Sigmoid colon (tissue), 7 donors: ENCODE measurements at regions of chr3 and their contacts with region 1.

Region 1: DNA sequence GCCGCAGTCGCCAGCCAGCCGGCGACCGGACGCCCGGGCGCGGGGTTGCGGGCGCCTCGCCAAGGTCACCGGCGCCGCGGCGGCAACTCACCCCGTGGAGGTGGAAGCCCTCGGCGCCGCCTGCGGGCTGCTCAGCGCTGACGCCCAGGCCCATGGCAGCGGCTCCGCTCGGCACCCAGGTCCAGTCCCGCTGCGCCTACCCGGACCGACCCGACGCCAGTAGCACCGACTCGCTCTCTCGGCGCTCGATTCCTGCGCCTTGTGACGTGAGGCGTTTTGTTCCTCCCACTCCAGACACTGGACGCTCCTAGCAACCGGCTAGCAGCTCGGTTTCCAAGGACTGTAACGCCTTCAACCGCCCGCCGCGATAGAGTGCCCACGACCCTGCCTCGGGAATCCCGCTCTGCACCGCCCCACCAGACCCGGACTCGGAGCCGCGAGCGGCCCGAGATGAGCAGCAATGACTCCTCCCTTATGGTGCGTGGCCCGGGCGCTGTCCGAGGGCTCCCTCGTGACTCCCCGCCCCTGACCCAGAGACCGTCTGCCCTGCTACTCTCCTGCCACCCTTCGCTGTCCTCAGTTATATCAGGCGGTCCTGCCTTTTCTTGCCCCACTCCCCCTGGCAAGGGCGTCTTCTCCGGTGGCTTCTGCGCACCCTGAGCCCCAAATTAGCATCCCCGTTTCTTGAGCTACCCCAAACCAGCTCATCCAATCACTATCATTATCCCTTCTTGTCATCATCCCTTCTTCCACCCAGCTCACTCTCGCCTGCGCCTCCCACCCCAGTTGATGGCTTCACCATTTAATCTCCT is at the starts of genes GORASP1 and TTC21A:
- DNase-seq: peak; percentile 96
- H3K4me3 ChIP-seq: peak within 1 kb of the TSS; percentile 75 to 98 (median 82)
- H3K27ac ChIP-seq: peak within 1 kb of the TSS; percentile 90 to 97 (median 94)
- H3K4me1 ChIP-seq: peaks cover 0 to 53% (median 43%) of the 10 kb centered on the region in 4 donors
- H3K27me3 ChIP-seq: no peaks in the 10 kb centered on the region
- CTCF ChIP-seq: no peak
- EP300 ChIP-seq: no peak
- POLR2A ChIP-seq: peak; percentile 50 to 62
- total RNA-seq, gene GORASP1: 43.5 to 49.9 (median 48.9) TPM
- total RNA-seq, gene TTC21A: 2.9 to 7.1 (median 4.4) TPM

Region 2: DNA sequence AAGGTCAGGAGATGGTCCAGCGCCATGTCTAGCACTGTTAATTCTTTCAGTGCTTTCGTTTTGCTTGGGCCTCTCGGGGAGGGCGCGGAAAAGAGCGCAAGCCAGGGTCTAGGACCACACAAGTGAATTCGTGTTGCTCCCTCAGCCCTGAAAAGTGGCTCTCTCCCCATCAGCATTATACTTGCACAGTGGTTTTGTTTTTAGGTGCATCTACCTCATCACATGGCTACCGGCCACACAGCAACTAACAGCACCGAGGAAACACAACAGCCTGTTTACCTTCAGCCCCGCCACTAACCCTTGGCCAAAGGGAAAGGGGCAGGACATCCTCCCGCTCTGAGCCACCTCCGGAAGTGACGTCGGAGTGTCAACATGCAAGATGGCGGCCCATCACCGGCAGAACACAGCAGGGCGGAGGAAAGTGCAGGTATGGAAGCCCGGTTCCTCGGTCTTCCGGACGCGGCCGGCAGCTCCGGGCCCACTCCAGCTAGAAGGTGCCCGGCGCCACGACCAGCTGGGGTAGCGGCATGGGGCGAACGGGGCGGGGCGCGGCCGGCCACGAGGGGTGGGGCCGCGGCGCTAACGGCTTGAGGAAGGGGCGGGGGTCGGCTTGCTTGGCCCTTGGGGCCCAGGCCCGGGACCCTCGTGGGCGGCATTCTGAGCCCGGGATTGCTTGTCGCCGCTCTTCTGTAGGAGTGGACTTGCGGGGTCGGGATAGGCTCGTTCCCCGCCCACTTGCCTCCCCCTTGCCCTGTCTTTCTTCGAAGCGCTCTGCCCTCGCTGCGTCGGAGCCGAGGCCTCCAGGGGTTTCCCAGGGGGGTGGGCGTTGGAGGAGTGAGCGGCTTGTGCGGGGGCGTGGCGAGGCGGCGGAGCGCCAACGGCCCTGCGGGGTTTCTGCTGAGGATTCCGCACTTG is 55.7 kb before region 1 on chr3 and contains the starts of genes SCN11A and WDR48:
- intact Hi-C with region 1: loop called (anchors 5 kb)
- DNase-seq: peak; percentile 97
- H3K4me3 ChIP-seq: peak within 1 kb of the TSS; percentile 92 to 99 (median 95)
- H3K27ac ChIP-seq: peak within 1 kb of the TSS; percentile 84 to 91 (median 87)
- H3K4me1 ChIP-seq: peaks cover 0 to 20% (median 16%) of the 10 kb centered on the region in 4 donors
- H3K27me3 ChIP-seq: no peaks in the 10 kb centered on the region
- CTCF ChIP-seq: no peak
- EP300 ChIP-seq: no peak
- POLR2A ChIP-seq: peak; percentile 69 to 83
- total RNA-seq, gene SCN11A: 0.82 to 3.0 (median 2.2) TPM
- total RNA-seq, gene WDR48: 37.4 to 50.2 (median 40.7) TPM

Region 3: DNA sequence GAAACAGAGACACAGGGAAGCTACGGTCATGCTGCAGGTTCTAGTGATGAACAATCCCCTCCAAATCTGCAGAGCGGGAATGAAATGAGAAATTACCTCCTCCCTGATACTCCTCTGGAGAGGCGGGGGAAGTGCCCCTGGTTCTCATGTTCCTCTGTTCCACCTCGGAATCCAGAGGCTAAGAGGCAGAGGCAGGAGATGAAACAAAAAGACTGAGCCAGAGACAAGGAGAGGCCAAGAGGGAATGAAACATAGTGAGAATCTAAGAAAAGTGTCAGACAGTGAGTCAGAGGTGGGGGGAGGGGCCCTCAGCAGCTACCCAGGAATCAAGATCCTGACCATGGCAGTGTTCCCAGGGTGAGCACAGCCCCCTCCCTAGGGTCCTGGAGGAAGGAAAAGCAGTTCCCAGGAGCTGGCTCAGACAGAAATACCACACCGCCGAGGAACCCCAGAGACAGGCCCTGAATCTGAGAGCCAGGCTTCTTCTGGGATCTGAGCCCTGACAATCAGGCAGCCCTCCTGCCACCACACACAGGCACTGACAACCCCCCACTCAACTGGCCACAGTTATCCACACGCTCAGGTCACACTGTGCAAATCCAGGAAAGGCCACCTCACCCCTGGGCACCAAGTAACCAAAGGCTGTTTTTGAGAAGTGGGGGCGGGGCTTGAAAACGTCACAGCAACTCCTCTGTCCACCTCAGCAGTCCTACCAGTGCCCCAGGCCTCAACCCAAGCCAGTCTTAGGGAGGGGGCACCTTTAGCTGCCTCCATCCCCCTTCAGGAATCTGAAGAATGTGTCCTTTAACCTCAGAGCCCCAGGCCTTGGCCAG is 43.4 kb after region 1 on chr3:
- intact Hi-C with region 1: loop called (anchors 1 kb)
- DNase-seq: peak; percentile 96
- H3K4me3 ChIP-seq: peak overlapping the region; percentile 90 to 100 (median 100)
- H3K27ac ChIP-seq: peak overlapping the region; percentile 97 to 100 (median 100)
- H3K4me1 ChIP-seq: peaks cover 0 to 74% (median 72%) of the 10 kb centered on the region in 4 donors
- H3K27me3 ChIP-seq: no peaks in the 10 kb centered on the region
- CTCF ChIP-seq: no peak
- EP300 ChIP-seq: peak in 2 of 4 donors; percentile 7 to 62
- POLR2A ChIP-seq: no peak

Region 4: DNA sequence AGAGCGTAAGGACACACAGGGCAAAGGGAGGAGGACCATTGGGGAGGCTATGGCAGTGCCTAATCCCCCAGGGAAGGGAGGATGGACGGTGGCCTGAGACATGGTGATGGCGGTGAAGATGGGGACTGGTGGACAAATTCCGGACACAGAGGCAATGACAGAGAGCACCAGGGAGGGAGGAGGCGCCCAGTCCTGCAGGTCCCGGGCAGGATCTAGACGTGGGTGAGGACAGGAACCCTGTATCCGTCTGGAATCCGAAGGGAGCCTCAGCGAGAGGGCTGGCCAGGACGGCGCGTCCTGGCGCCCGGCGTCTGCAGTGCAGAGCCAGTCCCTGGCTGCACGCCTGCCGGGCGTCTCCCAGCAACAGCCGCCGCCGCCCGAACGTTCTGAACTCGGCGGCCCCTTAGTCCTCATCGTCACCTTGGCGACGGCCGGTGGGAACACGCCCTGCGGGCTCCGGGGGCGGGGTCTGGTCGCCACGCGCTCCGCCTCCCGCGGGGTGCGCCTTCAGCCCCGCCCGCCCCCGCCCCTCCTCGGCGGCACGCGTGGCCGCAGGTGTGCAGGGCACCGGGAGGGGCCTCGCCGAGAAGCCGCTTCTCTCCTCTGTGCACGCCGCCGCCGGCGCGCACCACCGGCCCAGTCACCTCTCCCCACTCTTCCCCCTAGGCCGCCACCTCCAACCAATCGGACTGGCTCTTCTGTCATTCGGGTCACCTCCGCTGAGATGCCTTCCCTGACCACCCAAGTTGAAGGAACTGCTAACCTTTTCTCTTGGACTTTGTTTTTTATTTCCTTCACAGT is 73.2 kb after region 1 on chr3:
- intact Hi-C with region 1: loop called (anchors 2 kb)
- DNase-seq: peak; percentile 96
- H3K4me3 ChIP-seq: peak overlapping the region; percentile 3 to 47 (median 44)
- H3K27ac ChIP-seq: peak overlapping the region; percentile 87 to 95 (median 92)
- H3K4me1 ChIP-seq: peaks cover 0 to 63% (median 36%) of the 10 kb centered on the region in 4 donors
- H3K27me3 ChIP-seq: no peaks in the 10 kb centered on the region
- CTCF ChIP-seq: peak in 1 of 4 experiments; percentile 25
- EP300 ChIP-seq: peak in 1 of 4 donors; percentile 80
- POLR2A ChIP-seq: peak in 1 of 2 donors; percentile 12

Region 5: GRCh38 chr3:39406368-39407258 is 299.0 kb after region 1 on chr3 and contains the start of gene RPSA:
- intact Hi-C with region 1: loop called (anchors 2 kb)
- DNase-seq: peak; percentile 98
- H3K4me3 ChIP-seq: peak within 1 kb of the TSS; percentile 63 to 83 (median 69)
- H3K27ac ChIP-seq: peak within 1 kb of the TSS; percentile 78 to 85 (median 81)
- H3K4me1 ChIP-seq: peaks cover 0 to 26% (median 16%) of the 10 kb centered on the region in 4 donors
- H3K27me3 ChIP-seq: no peaks in the 10 kb centered on the region
- CTCF ChIP-seq: peak in 3 of 4 experiments; percentile 13 to 36 (median 27)
- EP300 ChIP-seq: no peak
- POLR2A ChIP-seq: peak; percentile 95 to 96
- total RNA-seq, gene RPSA: 1,024 to 1,538 (median 1,324) TPM

Region 6: GRCh38 chr3:39541917-39542329 is 434.3 kb after region 1 on chr3:
- intact Hi-C with region 1: no loop called
- DNase-seq: no peak
- H3K4me3 ChIP-seq: no peak overlapping the region
- H3K27ac ChIP-seq: no peak overlapping the region
- H3K4me1 ChIP-seq: no peaks in the 10 kb centered on the region
- H3K27me3 ChIP-seq: no peaks in the 10 kb centered on the region
- CTCF ChIP-seq: no peak
- EP300 ChIP-seq: no peak
- POLR2A ChIP-seq: no peak